Activated T-helper 1 cell treated with anti-CD3 and anti-CD28 coated beads, Interleukin-12 subunit alpha, Interleukin-12 subunit beta, Interleukin-2, Interleukin-4 antibody, amounts not matched to agents 30 ng/mL and 10 ng/mL and 1 ng/mL, durations not matched to agents 14 hours and 24 hours and 36 hours (primary cell): ENCODE measurements at regions of chr16 and their contacts with region 1.

Region 1: GRCh38 chr16:67841764-67842508 is at the start of gene THAP11:
- DNase-seq: peak; percentile 92
- H3K4me3 Mint-ChIP-seq: peak within 1 kb of the TSS; percentile 93
- H3K27ac Mint-ChIP-seq: peak within 1 kb of the TSS; percentile 96
- H3K4me1 Mint-ChIP-seq: peaks cover 33% of the 10 kb centered on the region
- H3K27me3 Mint-ChIP-seq: peaks cover 5% of the 10 kb centered on the region
- total RNA-seq, gene THAP11: 43.0 and 49.5 TPM in 2 replicates

Region 2: DNA sequence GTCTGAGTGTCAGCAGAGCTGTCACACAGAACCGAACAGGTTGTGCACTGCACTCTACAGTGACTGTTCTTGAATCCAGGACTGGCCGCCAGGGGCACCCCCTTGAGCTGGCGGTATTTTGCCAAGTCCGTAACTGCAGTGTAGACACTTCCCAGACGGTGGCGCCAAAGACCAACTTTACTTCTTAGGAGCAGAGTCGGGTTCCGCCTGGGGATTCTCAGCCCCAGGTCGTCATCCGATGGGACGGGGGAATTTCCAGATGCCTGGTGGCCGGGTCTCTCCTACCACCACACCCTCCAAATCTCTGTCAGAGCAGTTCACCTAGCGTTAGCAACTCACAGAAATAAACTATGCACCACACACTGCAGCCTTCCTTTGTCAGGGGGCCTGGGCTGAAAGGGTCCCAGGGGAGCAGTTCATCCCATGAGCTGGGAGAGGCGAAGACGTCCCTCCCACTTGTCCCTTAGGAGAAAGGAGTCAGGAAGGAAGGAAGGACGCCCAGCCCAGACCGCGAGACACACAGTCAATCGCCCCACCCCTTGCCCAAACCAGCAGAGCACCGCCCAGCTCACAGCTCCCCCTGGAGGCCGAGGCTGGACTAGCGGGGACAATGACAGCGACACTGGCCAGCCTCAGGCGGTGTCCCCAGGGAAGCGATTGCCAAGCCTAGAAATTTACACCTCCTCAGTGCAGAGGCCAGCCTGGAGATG is 320.7 kb before region 1 on chr16:
- intact Hi-C with region 1: loop called (anchors 1 kb)
- DNase-seq: peak; percentile 95
- H3K4me3 Mint-ChIP-seq: peak overlapping the region; percentile 88
- H3K27ac Mint-ChIP-seq: peak overlapping the region; percentile 98
- H3K4me1 Mint-ChIP-seq: peaks cover 15% of the 10 kb centered on the region
- H3K27me3 Mint-ChIP-seq: peaks cover 8% of the 10 kb centered on the region

Region 3: GRCh38 chr16:67719048-67719777 is 122.7 kb before region 1 on chr16 and contains the start of gene GFOD2:
- intact Hi-C with region 1: loop called (anchors 1 kb)
- DNase-seq: peak; percentile 97
- H3K4me3 Mint-ChIP-seq: peak within 1 kb of the TSS; percentile 96
- H3K27ac Mint-ChIP-seq: peak within 1 kb of the TSS; percentile 94
- H3K4me1 Mint-ChIP-seq: peaks cover 33% of the 10 kb centered on the region
- H3K27me3 Mint-ChIP-seq: no peaks in the 10 kb centered on the region
- total RNA-seq, gene GFOD2: 19.6 and 20.3 TPM in 2 replicates

Region 4: GRCh38 chr16:67872786-67873537 is 31.0 kb after region 1 on chr16 and contains the start of gene EDC4:
- intact Hi-C with region 1: loop called (anchors 1 kb)
- DNase-seq: peak; percentile 89
- H3K4me3 Mint-ChIP-seq: peak within 1 kb of the TSS; percentile 88
- H3K27ac Mint-ChIP-seq: peak within 1 kb of the TSS; percentile 81
- H3K4me1 Mint-ChIP-seq: peaks cover 35% of the 10 kb centered on the region
- H3K27me3 Mint-ChIP-seq: no peaks in the 10 kb centered on the region
- total RNA-seq, gene EDC4: 115 and 128 TPM in 2 replicates

Region 5: DNA sequence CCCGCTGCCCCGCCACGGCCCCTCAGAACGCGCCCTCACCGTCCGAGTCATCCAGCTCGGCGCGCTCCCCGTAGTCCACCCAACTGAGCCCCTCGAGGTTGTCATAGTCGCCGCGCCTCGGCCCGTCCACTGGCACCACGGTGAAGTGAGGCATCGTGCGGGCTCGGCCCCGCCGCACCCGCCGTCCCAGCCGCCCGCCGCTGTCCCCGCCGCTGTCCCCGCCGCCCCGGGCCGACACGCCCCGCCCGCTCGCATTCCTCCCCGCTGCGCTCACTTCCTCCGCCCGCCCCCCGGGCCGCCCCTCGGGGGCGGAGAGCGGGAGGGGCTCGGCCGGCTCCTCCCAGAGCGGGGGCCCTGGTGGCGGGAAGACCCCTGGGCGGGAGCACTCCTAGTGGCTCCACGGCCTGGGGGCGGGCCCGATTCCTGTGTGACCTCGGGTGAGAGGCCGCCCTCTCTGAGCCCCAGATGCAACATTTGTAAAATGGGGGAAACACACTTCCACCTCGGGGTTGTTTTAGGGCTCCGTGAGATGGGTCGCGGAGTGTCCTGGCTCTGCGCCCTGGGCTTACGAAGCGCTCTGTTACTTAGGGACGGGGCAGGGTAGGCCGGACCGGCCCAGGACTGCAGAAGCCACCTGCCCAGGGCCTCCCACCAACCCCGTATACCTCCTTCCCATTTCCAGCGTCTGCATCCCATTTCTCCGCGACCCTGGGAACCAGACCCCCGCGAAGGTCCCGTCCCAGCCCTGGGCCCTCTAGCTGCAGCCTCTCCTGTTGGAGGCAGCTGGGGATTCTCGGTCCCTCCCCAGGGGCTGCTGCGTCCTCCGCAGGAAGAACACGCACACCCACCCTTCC is 126.7 kb after region 1 on chr16 and contains the start of gene SLC12A4:
- intact Hi-C with region 1: loop called (anchors 1 kb)
- DNase-seq: peak; percentile 89
- H3K4me3 Mint-ChIP-seq: peak within 1 kb of the TSS; percentile 99
- H3K27ac Mint-ChIP-seq: peak within 1 kb of the TSS; percentile 96
- H3K4me1 Mint-ChIP-seq: peaks cover 40% of the 10 kb centered on the region
- H3K27me3 Mint-ChIP-seq: no peaks in the 10 kb centered on the region
- total RNA-seq, gene SLC12A4: 40.0 and 43.1 TPM in 2 replicates

Region 6: GRCh38 chr16:68328151-68328859 is 486.4 kb after region 1 on chr16:
- intact Hi-C with region 1: no loop called
- DNase-seq: peak; percentile 73
- H3K4me3 Mint-ChIP-seq: no peak overlapping the region
- H3K27ac Mint-ChIP-seq: no peak overlapping the region
- H3K4me1 Mint-ChIP-seq: peaks cover 41% of the 10 kb centered on the region
- H3K27me3 Mint-ChIP-seq: no peaks in the 10 kb centered on the region